ENCODE measurements at regions of chr6 and their contacts with region 1.

Region 1: GRCh38 chr6:95280690-95281273 is 296.6 kb upstream of the MANEA start:
- DNase-seq: no peak
- ATAC-seq: peak; percentile 81
- H3K4me3 ChIP-seq: no peak overlapping the region
- H3K27ac ChIP-seq: no peak overlapping the region
- H3K4me1 ChIP-seq: no peaks in the 10 kb centered on the region
- H3K27me3 ChIP-seq: no peaks in the 10 kb centered on the region
- CTCF ChIP-seq: peak; percentile 71

Region 2: GRCh38 chr6:94636780-94637385 is 643.9 kb before region 1 on chr6:
- CTCF ChIA-PET with region 1: no interaction called
- POLR2A ChIA-PET with region 1: no interaction called
- in situ Hi-C with region 1: no loop called
- intact Hi-C with region 1: loop called (anchors 10 kb)
- DNase-seq: peak; percentile 17
- ATAC-seq: peak; percentile 66; the same call in 1 of the 2 replicates
- H3K4me3 ChIP-seq: no peak overlapping the region
- H3K27ac ChIP-seq: no peak overlapping the region
- H3K4me1 ChIP-seq: no peaks in the 10 kb centered on the region
- H3K27me3 ChIP-seq: no peaks in the 10 kb centered on the region
- CTCF ChIP-seq: peak; percentile 63

Region 3: GRCh38 chr6:95203153-95203754 is 77.5 kb before region 1 on chr6:
- CTCF ChIA-PET with region 1: no interaction called
- POLR2A ChIA-PET with region 1: no interaction called
- in situ Hi-C with region 1: no loop called
- intact Hi-C with region 1: loop called (anchors 2 kb)
- DNase-seq: peak; percentile 18
- ATAC-seq: peak; percentile 71
- H3K4me3 ChIP-seq: no peak overlapping the region
- H3K27ac ChIP-seq: no peak overlapping the region
- H3K4me1 ChIP-seq: no peaks in the 10 kb centered on the region
- H3K27me3 ChIP-seq: no peaks in the 10 kb centered on the region
- CTCF ChIP-seq: peak; percentile 74; the same call in 1 of the 2 replicates

Region 4: GRCh38 chr6:95293701-95294426 is 13.1 kb after region 1 on chr6:
- CTCF ChIA-PET with region 1: no interaction called
- POLR2A ChIA-PET with region 1: no interaction called
- in situ Hi-C with region 1: no loop called
- intact Hi-C with region 1: no loop called
- DNase-seq: no peak
- ATAC-seq: no peak
- H3K4me3 ChIP-seq: no peak overlapping the region
- H3K27ac ChIP-seq: no peak overlapping the region
- H3K4me1 ChIP-seq: no peaks in the 10 kb centered on the region
- H3K27me3 ChIP-seq: no peaks in the 10 kb centered on the region
- CTCF ChIP-seq: no peak

Measured in Panc1 (cell line).